ENCODE measurements at regions of chr16 and their contacts with region 1.

Region 1: GRCh38 chr16:88941913-88942909 is 34.8 kb downstream of the CBFA2T3 start:
- DNase-seq: peak; percentile 36
- ATAC-seq: peak; percentile 83
- H3K4me3 ChIP-seq: peak overlapping the region; percentile 5 to 29
- H3K27ac ChIP-seq: no peak overlapping the region
- H3K4me1 ChIP-seq: peaks cover 0 to 18% of the 10 kb centered on the region in 2 experiments; a peak in 2 of 4 replicates
- H3K27me3 ChIP-seq: no peaks in the 10 kb centered on the region
- CTCF ChIP-seq: peak; percentile 41 to 78 (median 51); a peak in 5 of 6 replicates
- POLR2A ChIP-seq: no peak
- RAD21 ChIP-seq: peak; percentile 75

Region 2: DNA sequence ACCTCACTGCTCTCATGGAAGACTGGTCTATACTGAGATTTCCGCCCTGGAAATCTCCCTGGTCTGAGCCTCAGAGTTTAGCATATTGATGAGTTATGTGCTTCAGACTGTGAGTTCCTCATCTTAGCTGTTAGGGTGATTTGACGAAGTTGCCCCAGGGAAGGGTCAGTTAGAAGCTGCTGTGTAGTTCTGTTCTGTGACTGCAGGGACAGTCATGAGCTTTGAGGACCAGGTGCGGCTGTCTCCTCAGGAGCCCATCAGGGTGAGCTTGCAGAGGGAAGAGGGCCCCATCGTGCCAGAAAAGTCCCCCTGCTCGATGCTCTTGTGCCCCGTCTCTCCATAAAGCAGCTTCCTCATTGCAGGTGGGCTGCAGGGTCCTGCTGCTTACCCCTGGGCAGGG is 332.1 kb before region 1 on chr16:
- CTCF ChIA-PET with region 1: no interaction called
- POLR2A ChIA-PET with region 1: no interaction called
- RAD21 ChIA-PET with region 1: no interaction called
- intact Hi-C with region 1: no loop called
- DNase-seq: no peak
- ATAC-seq: 0 out of 2 replicates have a peak, but pooled peaks have one; percentile 55
- H3K4me3 ChIP-seq: no peak overlapping the region
- H3K27ac ChIP-seq: no peak overlapping the region
- H3K4me1 ChIP-seq: no peaks in the 10 kb centered on the region
- H3K27me3 ChIP-seq: no peaks in the 10 kb centered on the region
- CTCF ChIP-seq: peak in 2 of 3 experiments; percentile 33 to 38; a peak in 3 of 6 replicates
- POLR2A ChIP-seq: no peak
- RAD21 ChIP-seq: no peak

Region 3: GRCh38 chr16:89052890-89053592 is 110.8 kb after region 1 on chr16:
- CTCF ChIA-PET with region 1: interaction called, 5 read pairs
- POLR2A ChIA-PET with region 1: no interaction called
- RAD21 ChIA-PET with region 1: no interaction called
- intact Hi-C with region 1: loop called (anchors 5 kb)
- DNase-seq: peak; percentile 92
- ATAC-seq: peak; percentile 86
- H3K4me3 ChIP-seq: peak overlapping the region; percentile 77 to 97
- H3K27ac ChIP-seq: peak overlapping the region; percentile 75
- H3K4me1 ChIP-seq: peaks cover 13 to 28% of the 10 kb centered on the region in 2 experiments
- H3K27me3 ChIP-seq: no peaks in the 10 kb centered on the region
- CTCF ChIP-seq: no peak; a peak in 1 of 6 replicates
- POLR2A ChIP-seq: peak; percentile 80
- RAD21 ChIP-seq: no peak